ENCODE measurements at regions of chr1 and their contacts with region 1.

Region 1: GRCh38 chr1:165928075-165928731 is 100.8 kb downstream of the UCK2 start:
- DNase-seq: peak in 4 of 5 donors; percentile 45 to 55 (median 48)
- H3K4me3 ChIP-seq: no peak overlapping the region
- H3K4me3 Mint-ChIP-seq: no peak overlapping the region
- H3K27ac ChIP-seq: no peak overlapping the region
- H3K27ac Mint-ChIP-seq: peak overlapping the region in 1 of 7 donors; percentile 10
- H3K4me1 ChIP-seq: no peaks in the 10 kb centered on the region
- H3K4me1 Mint-ChIP-seq: peaks cover 0 to 2% (median 0%) of the 10 kb centered on the region in 4 donors
- H3K27me3 ChIP-seq: no peaks in the 10 kb centered on the region
- H3K27me3 Mint-ChIP-seq: peaks cover 10 to 17% of the 10 kb centered on the region in 2 donors

Region 2: GRCh38 chr1:165857046-165857801 is 71.0 kb before region 1 on chr1:
- CTCF ChIA-PET with region 1: no interaction called
- POLR2A ChIA-PET with region 1: no interaction called
- intact Hi-C with region 1: no loop called
- DNase-seq: no peak
- H3K4me3 ChIP-seq: no peak overlapping the region
- H3K4me3 Mint-ChIP-seq: no peak overlapping the region
- H3K27ac ChIP-seq: no peak overlapping the region
- H3K27ac Mint-ChIP-seq: peak overlapping the region in 1 of 7 donors; percentile 36
- H3K4me1 ChIP-seq: no peaks in the 10 kb centered on the region
- H3K4me1 Mint-ChIP-seq: peaks cover 3 to 5% (median 4%) of the 10 kb centered on the region in 4 donors
- H3K27me3 ChIP-seq: no peaks in the 10 kb centered on the region
- H3K27me3 Mint-ChIP-seq: no peaks in the 10 kb centered on the region

Region 3: DNA sequence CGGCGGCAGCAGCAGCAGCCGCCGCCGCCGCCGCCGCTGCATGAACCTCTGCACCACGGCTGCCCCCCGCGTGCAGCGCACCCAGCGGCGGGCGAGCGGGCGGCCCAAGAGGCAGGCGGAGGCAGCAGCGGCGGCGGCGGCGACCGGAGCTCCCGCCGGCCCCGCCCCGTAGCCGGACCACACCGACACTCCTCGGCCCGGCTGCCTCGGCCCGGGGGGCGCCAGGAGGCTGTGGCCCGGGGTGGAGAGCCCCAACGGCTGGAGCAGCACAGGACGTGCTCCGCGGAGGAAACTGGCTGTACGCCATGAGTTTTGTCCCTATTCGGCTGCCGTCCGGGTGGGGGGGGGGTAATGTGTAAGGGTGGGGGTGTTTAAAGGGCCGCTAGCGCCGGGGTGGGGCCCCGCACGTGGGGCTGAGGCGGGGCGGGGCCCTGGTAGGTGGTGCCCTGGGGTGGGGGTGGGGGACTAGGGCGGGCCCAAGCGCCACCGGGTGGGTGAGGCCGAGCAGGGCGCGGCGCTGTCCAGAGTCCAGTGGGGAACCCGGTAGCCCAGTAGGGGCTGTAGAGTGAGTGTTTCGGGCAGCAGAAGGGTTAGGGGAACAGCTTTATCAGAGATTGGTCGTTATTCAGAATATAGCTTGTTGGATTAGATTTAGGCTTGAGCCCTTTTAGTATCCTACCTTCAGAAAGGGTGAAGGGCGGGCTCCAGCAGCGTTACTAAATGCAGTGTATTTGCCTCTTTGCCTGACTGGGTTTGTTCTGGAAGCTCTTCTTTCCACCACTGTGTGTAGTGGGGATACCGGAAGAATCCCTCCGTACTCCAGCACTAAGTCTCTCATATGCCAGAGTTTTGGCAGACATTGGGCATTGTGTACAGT is 238.7 kb after region 1 on chr1 and contains the start of gene FAM78B:
- CTCF ChIA-PET with region 1: no interaction called
- POLR2A ChIA-PET with region 1: no interaction called
- intact Hi-C with region 1: loop called (anchors 10 kb)
- DNase-seq: peak; percentile 48 to 53 (median 51)
- H3K4me3 ChIP-seq: peak within 1 kb of the TSS in 1 of 2 donors; percentile 8
- H3K4me3 Mint-ChIP-seq: peak within 1 kb of the TSS; percentile 79 to 87 (median 81)
- H3K27ac ChIP-seq: no peak within 1 kb of the TSS
- H3K27ac Mint-ChIP-seq: peak within 1 kb of the TSS in 4 of 7 donors; percentile 8 to 44 (median 31)
- H3K4me1 ChIP-seq: peaks cover 14% of the 10 kb centered on the region
- H3K4me1 Mint-ChIP-seq: peaks cover 8 to 16% (median 12%) of the 10 kb centered on the region in 4 donors
- H3K27me3 ChIP-seq: peaks cover 12% of the 10 kb centered on the region
- H3K27me3 Mint-ChIP-seq: peaks cover 17% of the 10 kb centered on the region in 2 donors
- total RNA-seq, gene FAM78B: 0.22 to 0.32 TPM

Region 4: GRCh38 chr1:166432655-166433054 is 504.5 kb after region 1 on chr1:
- CTCF ChIA-PET with region 1: no interaction called
- POLR2A ChIA-PET with region 1: no interaction called
- intact Hi-C with region 1: loop called (anchors 2 kb)
- DNase-seq: no peak
- H3K4me3 ChIP-seq: no peak overlapping the region
- H3K4me3 Mint-ChIP-seq: no peak overlapping the region
- H3K27ac ChIP-seq: no peak overlapping the region
- H3K27ac Mint-ChIP-seq: no peak overlapping the region
- H3K4me1 ChIP-seq: no peaks in the 10 kb centered on the region
- H3K4me1 Mint-ChIP-seq: no peaks in the 10 kb centered on the region
- H3K27me3 ChIP-seq: no peaks in the 10 kb centered on the region
- H3K27me3 Mint-ChIP-seq: peaks cover 0 to 3% of the 10 kb centered on the region in 2 donors

Region 5: DNA sequence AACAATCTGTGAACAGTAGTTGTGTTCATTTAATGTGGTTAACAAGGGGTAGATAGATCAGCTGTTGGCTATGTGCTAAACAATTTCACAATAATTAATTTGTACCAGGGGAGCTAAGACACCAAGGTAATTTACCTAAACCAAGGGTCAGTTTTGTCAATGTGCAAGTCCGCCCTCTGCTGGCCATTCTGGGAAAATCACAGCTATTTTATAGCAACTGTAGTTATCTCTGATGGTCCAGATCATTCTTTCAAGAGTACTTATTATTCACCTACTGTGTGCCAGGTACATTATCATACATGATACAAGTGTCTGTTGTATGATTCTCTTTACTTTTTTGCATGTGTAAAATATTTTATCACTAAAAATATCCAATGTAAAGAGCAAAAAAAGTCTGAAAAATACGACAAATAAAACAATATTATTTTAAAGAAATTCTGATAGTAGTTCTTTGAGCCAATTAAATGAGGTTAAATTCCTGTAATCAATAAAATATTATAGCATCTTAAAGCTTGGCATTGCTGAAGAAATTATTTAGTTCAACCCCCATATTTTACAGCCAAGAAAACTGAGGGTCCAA is 550.9 kb after region 1 on chr1:
- CTCF ChIA-PET with region 1: interaction called, 57 read pairs
- POLR2A ChIA-PET with region 1: no interaction called
- intact Hi-C with region 1: loop called (anchors 1 kb)
- DNase-seq: peak; percentile 26 to 39 (median 38)
- H3K4me3 ChIP-seq: no peak overlapping the region
- H3K4me3 Mint-ChIP-seq: no peak overlapping the region
- H3K27ac ChIP-seq: no peak overlapping the region
- H3K27ac Mint-ChIP-seq: no peak overlapping the region
- H3K4me1 ChIP-seq: no peaks in the 10 kb centered on the region
- H3K4me1 Mint-ChIP-seq: peaks cover 0 to 2% (median 0%) of the 10 kb centered on the region in 4 donors
- H3K27me3 ChIP-seq: no peaks in the 10 kb centered on the region
- H3K27me3 Mint-ChIP-seq: no peaks in the 10 kb centered on the region

Measured in CD4-positive, alpha-beta memory T cell (primary cell).